ENCODE measurements at regions of chr6 and their contacts with region 1.

Region 1: GRCh38 chr6:83067448-83068413 is at the start of gene DOP1A:
- DNase-seq: peak; percentile 94
- CTCF ChIP-seq: peak; percentile 96

Region 2: DNA sequence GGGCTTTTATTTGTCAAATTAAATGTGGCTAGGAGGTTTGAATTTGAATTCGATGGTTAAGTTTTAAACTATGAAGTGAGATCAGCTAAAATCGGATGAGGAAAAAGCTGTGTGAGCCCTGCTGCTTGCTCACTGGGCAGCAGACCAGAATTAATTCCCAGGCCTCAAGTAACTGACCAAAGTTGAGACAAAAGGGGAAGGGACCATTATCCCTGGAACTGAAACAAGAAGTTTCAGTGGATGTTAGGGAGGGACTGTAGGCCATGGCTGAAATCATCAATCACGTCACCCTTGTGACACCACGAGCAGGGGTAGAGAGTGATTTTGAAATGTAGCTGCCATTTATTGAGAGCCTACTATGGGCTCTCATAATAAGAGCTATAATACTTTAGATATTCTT is 437.6 kb after region 1 on chr6:
- in situ Hi-C with region 1: loop called (anchors 5 kb)
- DNase-seq: no peak
- CTCF ChIP-seq: no peak